CD4-positive, alpha-beta T cell (primary cell): ENCODE measurements at regions of chr10 and their contacts with region 1.

Region 1: DNA sequence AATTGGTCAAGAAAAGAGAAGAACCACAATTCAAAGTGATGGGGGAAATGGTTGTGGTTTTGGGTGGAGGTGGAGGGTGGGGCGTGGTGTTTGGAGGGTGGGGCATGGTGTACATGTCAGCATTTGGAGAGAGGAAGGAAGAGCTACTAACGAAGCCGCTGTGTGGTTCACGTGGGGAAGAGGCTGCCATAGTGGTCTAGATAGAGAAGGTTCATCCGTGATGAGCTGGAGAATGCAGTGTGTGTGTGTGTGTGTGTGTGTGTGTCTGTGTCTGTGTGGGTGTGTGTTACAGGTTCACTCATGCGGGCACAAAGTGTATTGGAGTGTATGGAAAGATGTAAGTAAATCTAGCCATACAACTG is 6.1 kb upstream of the VCL start:
- DNase-seq: peak; percentile 64 to 94 (median 74)
- ATAC-seq: peak; percentile 100
- H3K4me3 ChIP-seq: no peak overlapping the region
- H3K4me3 Mint-ChIP-seq: peak overlapping the region; percentile 32
- H3K27ac ChIP-seq: peak overlapping the region in 1 of 2 donors; percentile 44
- H3K27ac Mint-ChIP-seq: peak overlapping the region; percentile 46
- H3K4me1 ChIP-seq: peaks cover 40% of the 10 kb centered on the region
- H3K4me1 Mint-ChIP-seq: peaks cover 56% of the 10 kb centered on the region
- H3K27me3 ChIP-seq: no peaks in the 10 kb centered on the region
- H3K27me3 Mint-ChIP-seq: no peaks in the 10 kb centered on the region
- CTCF ChIP-seq: no peak

Region 2: GRCh38 chr10:73974309-73974946 is 17.4 kb before region 1 on chr10:
- CTCF ChIA-PET with region 1: interaction called, 3 read pairs
- POLR2A ChIA-PET with region 1: interaction called, 15 read pairs
- intact Hi-C with region 1: no loop called
- DNase-seq: peak in 3 of 14 experiments; percentile 36 to 70 (median 37)
- ATAC-seq: peak; percentile 69
- H3K4me3 ChIP-seq: peak overlapping the region; percentile 5
- H3K4me3 Mint-ChIP-seq: peak overlapping the region; percentile 21
- H3K27ac ChIP-seq: no peak overlapping the region
- H3K27ac Mint-ChIP-seq: peak overlapping the region; percentile 38
- H3K4me1 ChIP-seq: peaks cover 16% of the 10 kb centered on the region
- H3K4me1 Mint-ChIP-seq: peaks cover 19% of the 10 kb centered on the region
- H3K27me3 ChIP-seq: no peaks in the 10 kb centered on the region
- H3K27me3 Mint-ChIP-seq: no peaks in the 10 kb centered on the region
- CTCF ChIP-seq: no peak

Region 3: GRCh38 chr10:74018241-74018640 is 26.4 kb after region 1 on chr10:
- CTCF ChIA-PET with region 1: no interaction called
- POLR2A ChIA-PET with region 1: no interaction called
- intact Hi-C with region 1: no loop called
- DNase-seq: no peak
- ATAC-seq: no peak
- H3K4me3 ChIP-seq: no peak overlapping the region
- H3K4me3 Mint-ChIP-seq: no peak overlapping the region
- H3K27ac ChIP-seq: no peak overlapping the region
- H3K27ac Mint-ChIP-seq: no peak overlapping the region
- H3K4me1 ChIP-seq: peaks cover 3% of the 10 kb centered on the region
- H3K4me1 Mint-ChIP-seq: peaks cover 38% of the 10 kb centered on the region
- H3K27me3 ChIP-seq: no peaks in the 10 kb centered on the region
- H3K27me3 Mint-ChIP-seq: no peaks in the 10 kb centered on the region
- CTCF ChIP-seq: no peak